Ascending aorta (tissue), 2 donors: ENCODE measurements at regions of chr17 and their contacts with region 1.

Region 1: DNA sequence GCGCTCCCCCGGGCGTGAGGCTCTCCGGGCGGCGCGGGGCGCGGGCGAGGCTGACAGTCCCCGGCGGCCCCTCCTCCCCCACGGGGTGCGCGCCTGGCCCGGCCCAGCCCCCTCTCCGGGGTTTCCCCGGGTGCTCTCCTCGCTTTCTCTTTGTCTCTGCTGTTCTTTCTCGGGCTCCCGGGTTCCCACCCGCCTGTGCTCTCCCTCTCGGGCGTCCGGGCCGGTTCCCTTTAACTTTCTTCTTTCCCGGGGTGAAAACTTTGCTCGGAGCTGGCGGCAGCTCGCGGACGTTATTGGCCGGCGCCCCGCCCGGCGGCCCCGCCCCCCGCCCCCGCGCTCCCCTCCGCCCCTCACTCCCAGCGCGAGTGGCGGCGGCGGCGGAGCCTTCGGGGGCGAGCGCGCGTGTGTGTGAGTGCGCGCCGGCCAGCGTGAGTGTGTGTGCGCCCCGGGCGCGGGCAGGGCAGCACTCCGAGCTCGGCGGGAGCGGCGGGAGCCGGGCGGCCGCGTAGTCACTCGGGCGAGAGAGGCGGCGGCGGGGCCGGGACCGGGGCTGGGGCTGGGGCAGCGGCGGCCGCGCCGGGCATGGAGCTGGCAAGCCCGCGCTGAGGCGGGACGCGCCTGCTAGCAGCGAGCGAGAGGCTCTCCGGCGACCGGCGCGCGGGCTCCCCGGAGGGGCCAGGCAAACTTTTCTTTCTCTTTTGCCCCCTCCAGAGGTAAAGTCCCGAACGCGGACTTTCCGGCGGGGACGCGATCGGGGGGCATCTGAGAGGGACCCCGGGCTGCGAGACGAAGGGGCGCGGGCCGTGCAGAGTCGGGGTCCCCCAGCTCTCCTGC is at the start of gene NTN1:
- DNase-seq: peak in 1 of 2 donors; percentile 77
- H3K4me3 ChIP-seq: peak within 1 kb of the TSS; percentile 72 to 84
- H3K27ac ChIP-seq: peak within 1 kb of the TSS; percentile 75
- H3K4me1 ChIP-seq: peaks cover 7 to 10% of the 10 kb centered on the region in 2 donors
- H3K27me3 ChIP-seq: no peaks in the 10 kb centered on the region
- CTCF ChIP-seq: no peak
- total RNA-seq, gene NTN1: 29.6 TPM

Region 2: DNA sequence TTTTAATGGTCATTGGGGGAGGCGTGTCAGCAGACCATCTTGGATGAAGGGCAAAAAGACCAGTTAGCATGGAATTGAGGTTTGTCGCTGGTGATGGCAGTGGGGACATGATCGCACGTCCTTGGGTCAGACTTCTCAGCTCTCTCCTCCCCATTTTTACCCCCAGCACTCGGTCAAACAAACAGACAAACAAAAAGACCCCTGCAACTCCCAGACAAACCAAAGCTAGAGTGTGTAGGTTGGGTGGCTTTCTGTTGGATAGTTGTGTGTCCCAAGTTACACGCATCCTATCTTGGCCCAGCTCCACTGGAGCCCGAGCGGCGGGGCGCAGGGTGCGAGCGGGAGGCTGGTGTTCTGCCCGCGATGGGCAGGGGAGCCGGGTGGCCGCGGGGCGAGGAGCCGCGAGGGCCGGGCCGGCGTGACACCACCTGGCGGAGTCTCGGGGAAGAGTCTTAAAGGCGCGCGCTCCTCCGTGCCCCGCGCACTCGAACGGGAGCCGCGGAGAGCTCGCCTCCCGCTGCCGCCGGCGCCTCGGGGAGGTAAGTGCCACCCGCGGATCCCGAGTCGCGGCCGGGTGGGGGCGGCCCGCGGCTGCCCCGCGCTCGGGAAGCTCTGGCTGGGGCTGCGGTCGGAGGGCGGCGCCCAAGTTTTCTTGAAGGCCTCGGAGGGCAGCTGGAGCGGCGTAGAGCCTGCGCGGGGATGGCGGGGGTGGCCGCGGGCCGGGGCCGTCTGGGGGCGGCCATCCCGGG is 18.6 kb before region 1 on chr17:
- intact Hi-C with region 1: loop called (anchors 1 kb)
- DNase-seq: peak in 1 of 2 donors; percentile 65
- H3K4me3 ChIP-seq: peak overlapping the region; percentile 64 to 77
- H3K27ac ChIP-seq: peak overlapping the region in 1 of 2 donors; percentile 19
- H3K4me1 ChIP-seq: peaks cover 0 to 4% of the 10 kb centered on the region in 2 donors
- H3K27me3 ChIP-seq: no peaks in the 10 kb centered on the region
- CTCF ChIP-seq: peak; percentile 30 to 37 (median 30)

Region 3: GRCh38 chr17:9072696-9073339 is 51.4 kb after region 1 on chr17:
- intact Hi-C with region 1: loop called (anchors 5 kb)
- DNase-seq: peak in 1 of 2 donors; percentile 84
- H3K4me3 ChIP-seq: peak overlapping the region; percentile 4 to 46
- H3K27ac ChIP-seq: peak overlapping the region; percentile 69 to 82
- H3K4me1 ChIP-seq: peaks cover 14 to 34% of the 10 kb centered on the region in 2 donors
- H3K27me3 ChIP-seq: no peaks in the 10 kb centered on the region
- CTCF ChIP-seq: no peak

Region 4: GRCh38 chr17:9087921-9088320 is 66.5 kb after region 1 on chr17:
- intact Hi-C with region 1: no loop called
- DNase-seq: no peak
- H3K4me3 ChIP-seq: no peak overlapping the region
- H3K27ac ChIP-seq: no peak overlapping the region
- H3K4me1 ChIP-seq: peaks cover 7 to 15% of the 10 kb centered on the region in 2 donors
- H3K27me3 ChIP-seq: no peaks in the 10 kb centered on the region
- CTCF ChIP-seq: no peak

Region 5: DNA sequence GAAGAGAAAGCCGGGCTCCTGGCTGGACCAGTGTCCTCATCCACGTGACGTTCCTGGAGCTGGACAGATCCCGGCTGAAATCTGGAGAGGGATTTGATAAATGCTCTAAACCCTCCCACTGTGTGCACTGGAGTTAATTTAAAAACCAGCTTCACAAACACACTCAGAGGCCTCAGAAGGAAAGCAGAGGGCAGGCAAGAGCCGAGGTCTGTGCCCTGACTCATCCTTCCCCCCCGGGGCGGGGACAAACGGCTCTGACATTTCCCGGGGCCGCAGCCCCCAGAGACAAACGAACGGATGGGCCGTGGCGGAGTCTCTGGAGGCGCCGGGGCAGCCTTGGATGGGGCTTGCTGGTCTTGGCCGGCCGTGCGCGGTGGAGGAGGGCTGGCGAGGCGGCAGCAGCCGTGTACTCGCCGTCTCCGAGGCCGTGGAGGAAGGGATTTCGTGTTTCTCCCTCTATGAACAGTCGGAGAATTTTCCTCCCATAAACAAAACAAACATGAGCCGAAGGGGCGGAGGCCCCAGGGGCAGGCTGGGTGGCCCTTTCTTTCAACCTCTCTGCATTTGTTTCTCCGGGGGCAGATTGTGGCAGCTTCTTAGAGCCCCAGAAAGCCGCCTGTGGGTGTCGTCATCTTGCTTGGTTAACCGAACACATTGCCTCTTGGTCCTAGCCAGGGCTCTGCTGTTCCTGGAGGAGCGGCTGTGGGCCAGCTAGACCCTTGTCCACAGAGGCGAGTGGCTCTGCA is 94.2 kb after region 1 on chr17:
- intact Hi-C with region 1: loop called (anchors 5 kb)
- DNase-seq: peak; percentile 35 to 89
- H3K4me3 ChIP-seq: peak overlapping the region; percentile 46 to 59
- H3K27ac ChIP-seq: peak overlapping the region; percentile 88 to 93
- H3K4me1 ChIP-seq: peaks cover 0 to 11% of the 10 kb centered on the region in 2 donors
- H3K27me3 ChIP-seq: no peaks in the 10 kb centered on the region
- CTCF ChIP-seq: peak in 2 of 3 experiments; percentile 45 to 65

Region 6: GRCh38 chr17:9228408-9229151 is 207.2 kb after region 1 on chr17:
- intact Hi-C with region 1: loop called (anchors 2 kb)
- DNase-seq: no peak
- H3K4me3 ChIP-seq: peak overlapping the region in 1 of 2 donors; percentile 34
- H3K27ac ChIP-seq: peak overlapping the region; percentile 82 to 85
- H3K4me1 ChIP-seq: peaks cover 4 to 20% of the 10 kb centered on the region in 2 donors
- H3K27me3 ChIP-seq: no peaks in the 10 kb centered on the region
- CTCF ChIP-seq: no peak